HCT116 (cell line): ENCODE measurements at regions of chr5 and their contacts with region 1.

Region 1: GRCh38 chr5:142713121-142713706 is 27.3 kb upstream of the FGF1 start:
- DNase-seq: peak; percentile 80
- ATAC-seq: peak; percentile 83
- H3K4me3 ChIP-seq: peak overlapping the region; percentile 46 to 57
- H3K27ac ChIP-seq: peak overlapping the region; percentile 44
- H3K4me1 ChIP-seq: peaks cover 2 to 21% of the 10 kb centered on the region in 2 experiments; a peak in 3 of 4 replicates
- H3K27me3 ChIP-seq: no peaks in the 10 kb centered on the region
- CTCF ChIP-seq: peak; percentile 84 to 99 (median 96)
- POLR2A ChIP-seq: no peak
- RAD21 ChIP-seq: peak; percentile 73

Region 2: DNA sequence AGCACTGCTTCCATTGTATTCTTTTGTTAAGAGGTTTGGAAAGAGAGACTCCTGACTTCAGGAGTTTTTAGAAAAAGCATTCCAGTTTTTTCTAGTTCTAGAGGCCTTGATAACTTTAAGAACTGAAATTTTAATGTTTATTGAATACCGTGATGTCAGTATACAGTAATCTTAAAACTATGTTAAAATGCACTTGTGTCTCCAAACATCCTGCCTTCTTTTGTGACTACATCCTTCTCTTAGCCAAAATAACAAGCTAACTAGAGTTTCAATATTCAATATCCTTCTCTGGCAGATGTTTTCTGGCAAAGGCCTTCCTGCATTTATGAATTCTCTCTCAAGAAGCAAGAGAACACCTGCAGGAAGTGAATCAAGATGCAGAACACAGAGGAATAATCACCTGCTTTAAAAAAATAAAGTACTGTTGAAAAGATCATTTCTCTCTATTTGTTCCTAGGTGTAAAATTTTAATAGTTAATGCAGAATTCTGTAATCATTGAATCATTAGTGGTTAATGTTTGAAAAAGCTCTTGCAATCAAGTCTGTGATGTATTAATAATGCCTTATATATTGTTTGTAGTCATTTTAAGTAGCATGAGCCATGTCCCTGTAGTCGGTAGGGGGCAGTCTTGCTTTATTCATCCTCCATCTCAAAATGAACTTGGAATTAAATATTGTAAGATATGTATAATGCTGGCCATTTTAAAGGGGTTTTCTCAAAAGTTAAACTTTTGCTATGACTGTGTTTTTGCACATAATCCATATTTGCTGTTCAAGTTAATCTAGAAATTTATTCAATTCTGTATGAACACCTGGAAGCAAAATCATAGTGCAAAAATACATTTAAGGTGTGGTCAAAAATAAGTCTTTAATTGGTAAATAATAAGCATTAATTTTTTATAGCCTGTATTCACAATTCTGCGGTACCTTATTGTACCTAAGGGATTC is 561.5 kb before region 1 on chr5:
- CTCF ChIA-PET with region 1: interaction called, 9 read pairs
- POLR2A ChIA-PET with region 1: no interaction called
- RAD21 ChIA-PET with region 1: no interaction called
- intact Hi-C with region 1: loop called (anchors 5 kb)
- DNase-seq: peak; percentile 63
- ATAC-seq: peak; percentile 87
- H3K4me3 ChIP-seq: no peak overlapping the region
- H3K27ac ChIP-seq: no peak overlapping the region
- H3K4me1 ChIP-seq: peaks cover 2 to 10% of the 10 kb centered on the region in 2 experiments; a peak in 2 of 4 replicates
- H3K27me3 ChIP-seq: no peaks in the 10 kb centered on the region
- CTCF ChIP-seq: peak; percentile 79 to 93 (median 90)
- POLR2A ChIP-seq: no peak
- RAD21 ChIP-seq: peak; percentile 92

Region 3: DNA sequence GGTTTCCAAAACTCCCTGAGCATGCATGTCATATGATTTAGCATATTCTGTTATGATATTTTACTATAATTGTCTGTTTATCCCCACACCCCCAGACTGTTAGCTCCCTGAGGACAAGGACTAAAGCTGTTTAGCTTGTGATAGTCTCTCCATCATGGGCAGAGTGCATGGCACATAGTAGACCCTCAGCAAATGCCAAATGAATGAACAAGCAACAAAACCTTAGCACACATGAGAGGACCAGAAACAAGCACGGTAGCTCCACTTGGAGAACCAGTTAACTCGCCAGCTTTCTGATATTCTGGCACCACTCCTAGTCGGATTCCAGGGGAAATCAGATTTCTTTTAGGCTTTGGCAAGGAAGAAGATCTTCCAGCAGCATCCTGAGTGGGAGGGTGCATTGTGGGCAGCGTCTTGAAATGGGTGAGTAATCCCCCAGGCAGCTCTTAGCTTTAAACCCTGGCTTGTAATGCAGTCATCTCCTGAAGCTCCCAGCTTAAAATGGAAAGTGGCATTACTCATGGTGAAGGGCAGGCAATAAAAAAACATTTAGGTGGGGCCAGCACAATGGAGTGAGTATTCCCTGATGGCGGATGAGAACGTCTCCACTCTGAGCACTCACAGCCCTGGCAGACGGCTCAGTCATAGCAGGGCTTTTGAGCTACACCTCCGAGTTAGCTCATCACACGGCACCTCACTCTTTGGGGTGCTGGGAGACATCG is 68.4 kb before region 1 on chr5:
- CTCF ChIA-PET with region 1: interaction called, 10 read pairs
- POLR2A ChIA-PET with region 1: no interaction called
- RAD21 ChIA-PET with region 1: no interaction called
- intact Hi-C with region 1: no loop called
- DNase-seq: peak; percentile 96
- ATAC-seq: peak; percentile 91
- H3K4me3 ChIP-seq: peak overlapping the region; percentile 12 to 41
- H3K27ac ChIP-seq: peak overlapping the region; percentile 72
- H3K4me1 ChIP-seq: peaks cover 23 to 34% of the 10 kb centered on the region in 2 experiments
- H3K27me3 ChIP-seq: no peaks in the 10 kb centered on the region
- CTCF ChIP-seq: no peak
- POLR2A ChIP-seq: no peak
- RAD21 ChIP-seq: no peak; the same call in 1 of the 2 replicates

Region 4: DNA sequence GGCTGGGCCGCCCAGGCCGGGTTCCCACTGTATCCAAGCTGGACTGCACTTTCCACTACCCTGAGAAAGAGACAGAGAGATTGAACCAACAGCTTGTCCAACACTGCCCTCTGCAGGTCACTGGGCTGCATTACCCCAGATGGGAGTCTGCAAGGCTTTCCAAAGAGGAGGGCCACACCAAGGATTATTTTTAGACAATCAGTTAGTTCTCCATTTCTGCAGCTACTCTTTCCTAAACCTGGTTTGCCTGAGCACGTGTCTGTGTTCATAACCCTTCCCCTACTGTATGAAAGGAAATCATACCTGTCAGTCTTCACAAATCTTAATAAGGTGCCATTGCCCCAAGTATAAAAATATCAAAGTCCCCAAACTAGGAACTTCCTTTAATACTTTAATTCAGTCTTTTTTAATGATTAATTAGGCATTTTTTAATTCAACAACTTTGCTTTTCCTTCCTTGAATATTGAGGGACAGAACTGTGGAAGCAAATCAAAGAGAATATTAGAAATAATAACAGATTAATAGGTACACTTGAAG is 14.0 kb before region 1 on chr5:
- CTCF ChIA-PET with region 1: interaction called, 23 read pairs
- POLR2A ChIA-PET with region 1: no interaction called
- RAD21 ChIA-PET with region 1: interaction called in 1 of 2 experiments, 3 read pairs
- intact Hi-C with region 1: no loop called
- DNase-seq: peak; percentile 66
- ATAC-seq: peak; percentile 98
- H3K4me3 ChIP-seq: no peak overlapping the region
- H3K27ac ChIP-seq: no peak overlapping the region
- H3K4me1 ChIP-seq: peaks cover 11 to 14% of the 10 kb centered on the region in 2 experiments; a peak in 3 of 4 replicates
- H3K27me3 ChIP-seq: no peaks in the 10 kb centered on the region
- CTCF ChIP-seq: peak; percentile 94 to 97 (median 97)
- POLR2A ChIP-seq: no peak
- RAD21 ChIP-seq: peak; percentile 100

Region 5: GRCh38 chr5:142874537-142874936 is 161.3 kb after region 1 on chr5:
- CTCF ChIA-PET with region 1: interaction called, 31 read pairs
- POLR2A ChIA-PET with region 1: no interaction called
- RAD21 ChIA-PET with region 1: no interaction called
- intact Hi-C with region 1: no loop called
- DNase-seq: no peak
- ATAC-seq: no peak
- H3K4me3 ChIP-seq: no peak overlapping the region
- H3K27ac ChIP-seq: no peak overlapping the region
- H3K4me1 ChIP-seq: peaks cover 52 to 61% of the 10 kb centered on the region in 2 experiments; a peak in 3 of 4 replicates
- H3K27me3 ChIP-seq: no peaks in the 10 kb centered on the region
- CTCF ChIP-seq: no peak
- POLR2A ChIP-seq: no peak
- RAD21 ChIP-seq: no peak

Region 6: DNA sequence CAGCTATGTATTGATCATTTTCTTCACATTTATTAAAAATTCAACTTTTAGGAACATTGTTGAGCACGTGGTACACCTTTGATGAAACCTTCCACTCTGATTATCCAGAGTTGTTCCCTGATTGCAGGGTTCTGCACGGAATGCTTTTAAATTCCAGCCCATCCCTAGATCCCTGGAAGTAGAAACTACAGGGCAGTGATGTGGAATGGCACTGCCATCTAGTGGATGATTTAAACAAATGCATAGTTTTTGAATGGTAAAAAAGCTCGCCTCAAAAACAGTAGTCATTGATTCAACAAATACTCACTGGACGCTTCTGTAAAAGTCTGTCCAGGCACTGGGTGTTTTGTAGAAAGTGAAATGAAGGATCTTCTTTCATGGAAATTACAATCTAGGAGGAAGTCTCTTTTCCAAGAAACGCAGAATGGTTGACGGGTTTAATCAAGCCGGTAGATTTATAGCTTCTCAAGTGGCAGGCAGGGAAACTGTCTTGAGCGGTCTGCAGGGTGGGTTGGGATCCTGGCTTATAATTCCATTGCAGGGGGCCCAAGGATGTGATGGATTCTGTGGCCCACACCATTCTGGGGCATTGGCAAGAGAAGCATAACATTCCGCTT is 175.4 kb after region 1 on chr5:
- CTCF ChIA-PET with region 1: interaction called, 128 read pairs
- POLR2A ChIA-PET with region 1: interaction called, 5 read pairs
- RAD21 ChIA-PET with region 1: interaction called, 6 to 14 read pairs
- intact Hi-C with region 1: loop called (anchors 1 kb)
- DNase-seq: no peak
- ATAC-seq: peak; percentile 78
- H3K4me3 ChIP-seq: no peak overlapping the region
- H3K27ac ChIP-seq: no peak overlapping the region
- H3K4me1 ChIP-seq: peaks cover 6 to 10% of the 10 kb centered on the region in 2 experiments; a peak in 1 of 4 replicates
- H3K27me3 ChIP-seq: no peaks in the 10 kb centered on the region
- CTCF ChIP-seq: peak; percentile 59 to 84 (median 80)
- POLR2A ChIP-seq: no peak
- RAD21 ChIP-seq: peak; percentile 82

Region 7: DNA sequence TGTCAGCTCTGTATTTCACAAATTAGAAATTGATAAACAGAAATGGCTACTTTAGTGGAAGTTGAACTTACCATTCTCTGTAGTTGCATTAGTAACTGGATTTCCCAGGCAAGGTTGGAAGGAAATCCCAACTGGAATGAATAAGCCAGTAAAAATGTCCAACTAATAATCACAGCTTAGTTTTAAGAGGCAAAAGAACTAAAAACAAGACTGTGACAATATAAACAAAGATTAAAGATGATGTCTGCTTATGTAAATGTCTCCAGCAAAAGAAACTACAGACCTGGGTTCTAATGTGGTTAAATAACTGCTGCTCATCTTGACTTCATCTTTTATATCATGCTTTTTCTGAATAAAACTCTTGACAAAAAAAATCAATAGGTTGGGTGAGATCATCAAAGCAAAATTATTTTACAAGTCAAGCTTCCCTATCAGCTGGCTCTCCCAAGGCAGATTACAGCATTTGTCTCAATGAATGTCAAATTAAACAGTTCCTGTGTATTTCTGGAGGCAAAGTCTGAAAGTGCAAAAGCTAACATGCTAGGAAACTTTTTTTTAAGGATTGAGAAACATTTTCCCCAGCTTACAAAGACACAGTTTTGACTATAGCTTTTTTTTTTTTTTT is 1036.5 kb after region 1 on chr5:
- CTCF ChIA-PET with region 1: no interaction called
- POLR2A ChIA-PET with region 1: no interaction called
- RAD21 ChIA-PET with region 1: no interaction called
- intact Hi-C with region 1: no loop called
- DNase-seq: no peak
- ATAC-seq: no peak
- H3K4me3 ChIP-seq: no peak overlapping the region
- H3K27ac ChIP-seq: no peak overlapping the region
- H3K4me1 ChIP-seq: no peaks in the 10 kb centered on the region
- H3K27me3 ChIP-seq: no peaks in the 10 kb centered on the region
- CTCF ChIP-seq: no peak
- POLR2A ChIP-seq: no peak
- RAD21 ChIP-seq: no peak

Region 8: DNA sequence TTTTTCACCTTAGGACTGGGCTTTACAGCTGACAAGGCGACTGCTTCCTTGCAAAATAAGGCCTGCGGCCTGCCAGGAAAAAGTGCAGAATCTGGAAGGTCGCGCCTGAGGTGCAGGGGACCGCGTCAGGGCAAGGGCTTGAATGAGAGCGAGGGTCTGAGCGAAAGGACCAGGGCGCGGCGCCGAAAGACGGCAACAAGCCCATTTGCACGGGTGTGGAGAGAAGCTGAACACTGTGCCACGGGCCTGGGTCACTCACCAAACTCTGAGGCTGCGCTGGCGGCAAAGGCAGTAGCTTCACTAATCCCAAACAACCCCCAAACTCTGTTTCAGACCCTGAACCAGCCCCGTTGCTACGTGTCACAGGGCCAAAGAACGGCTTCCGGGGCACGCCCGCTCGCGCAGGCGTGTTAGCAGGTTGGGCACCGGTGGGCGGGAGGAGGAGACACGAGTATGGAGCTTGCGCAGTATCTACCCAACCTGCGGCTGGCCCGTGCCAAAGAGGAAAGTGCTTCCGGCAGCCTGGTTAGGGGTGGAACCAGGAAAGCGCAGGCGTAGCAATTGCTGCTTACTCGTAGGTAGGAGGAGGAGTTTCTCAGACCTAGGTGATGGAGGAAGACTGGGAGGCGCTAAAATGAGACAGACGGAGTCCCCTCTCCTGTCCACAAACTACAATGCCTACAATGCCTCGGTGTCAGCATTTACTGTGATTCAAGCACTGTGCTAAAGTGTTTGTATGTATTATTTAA is 1457.2 kb after region 1 on chr5 and contains the starts of genes KCTD16 and YIPF5:
- CTCF ChIA-PET with region 1: no interaction called
- POLR2A ChIA-PET with region 1: no interaction called
- RAD21 ChIA-PET with region 1: no interaction called
- intact Hi-C with region 1: loop called (anchors 10 kb)
- DNase-seq: peak; percentile 92
- ATAC-seq: peak; percentile 100
- H3K4me3 ChIP-seq: peak within 1 kb of the TSS; percentile 85 to 95
- H3K27ac ChIP-seq: peak within 1 kb of the TSS; percentile 19; the same call in 1 of the 2 replicates
- H3K4me1 ChIP-seq: peaks cover 7 to 14% of the 10 kb centered on the region in 2 experiments; a peak in 2 of 4 replicates
- H3K27me3 ChIP-seq: no peaks in the 10 kb centered on the region
- CTCF ChIP-seq: no peak
- POLR2A ChIP-seq: peak; percentile 84
- RAD21 ChIP-seq: no peak
- total RNA-seq, gene KCTD16: 0.64 TPM
- total RNA-seq, gene YIPF5: 44.5 TPM